ENCODE measurements at regions of chr3 and their contacts with region 1.

Region 1: GRCh38 chr3:123602325-123602724 is 17.5 kb upstream of the HACD2 start:
- DNase-seq: peak; percentile 65
- H3K4me3 ChIP-seq: no peak overlapping the region
- CTCF ChIP-seq: no peak

Region 2: GRCh38 chr3:123053106-123053505 is 549.2 kb before region 1 on chr3:
- CTCF ChIA-PET with region 1: no interaction called
- POLR2A ChIA-PET with region 1: no interaction called
- DNase-seq: no peak
- H3K4me3 ChIP-seq: no peak overlapping the region
- CTCF ChIP-seq: no peak

Region 3: DNA sequence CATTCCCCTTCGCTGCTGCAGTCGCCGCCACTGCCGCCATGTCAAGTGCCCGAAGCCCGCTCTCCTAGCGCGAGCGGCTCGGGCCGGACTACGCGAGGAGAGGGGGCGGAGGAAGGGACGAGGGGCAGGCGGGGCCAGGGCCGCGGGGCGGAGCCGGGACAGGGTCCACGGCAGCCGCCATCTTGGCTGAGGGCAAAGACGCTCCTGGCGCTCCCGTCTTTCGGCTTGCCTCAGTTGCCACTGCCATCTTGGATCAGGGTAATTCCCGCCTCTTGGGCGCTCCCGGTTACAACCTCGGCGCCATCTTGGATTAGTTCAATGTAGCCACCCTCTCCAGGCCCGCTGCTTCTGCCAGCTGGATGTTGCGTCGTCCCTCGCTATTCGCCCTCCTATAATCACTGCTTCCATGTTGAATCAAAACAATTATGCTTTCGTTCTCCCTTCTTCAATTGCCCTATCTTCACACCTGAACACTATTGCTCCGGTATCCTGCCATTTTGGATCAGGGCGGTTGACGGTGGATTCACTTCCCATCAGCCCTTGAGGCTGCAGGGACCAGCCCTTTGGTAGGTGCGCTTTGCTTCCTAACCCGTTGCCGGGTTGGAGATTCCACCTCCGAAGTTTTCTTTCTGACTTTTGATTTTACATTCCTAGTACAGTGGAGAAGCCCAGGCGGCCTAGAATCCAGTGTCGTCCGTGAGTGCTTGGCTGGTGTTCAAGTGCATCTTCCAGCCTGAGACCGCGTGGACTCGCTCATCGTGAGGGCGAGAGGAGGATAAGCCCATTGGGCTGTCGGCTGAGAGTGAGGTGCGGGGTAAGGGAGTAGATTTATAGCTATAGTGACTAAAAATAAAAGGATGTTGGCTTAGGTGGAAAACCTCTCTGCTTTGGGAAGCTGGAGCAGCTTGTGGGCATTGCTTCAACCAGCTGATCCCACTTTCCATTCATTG is 17.1 kb before region 1 on chr3 and contains the start of gene HACD2:
- CTCF ChIA-PET with region 1: interaction called, 4 read pairs
- POLR2A ChIA-PET with region 1: interaction called, 14 read pairs
- DNase-seq: peak; percentile 85
- H3K4me3 ChIP-seq: peak within 1 kb of the TSS; percentile 76
- CTCF ChIP-seq: no peak